AG04450 (cell line): ENCODE measurements at regions of chr5 and their contacts with region 1.

Region 1: GRCh38 chr5:142699184-142699720 is 13.4 kb upstream of the FGF1 start:
- DNase-seq: peak; percentile 76
- H3K4me3 ChIP-seq: no peak overlapping the region
- H3K27ac ChIP-seq: no peak overlapping the region
- H3K27me3 ChIP-seq: no peaks in the 10 kb centered on the region
- CTCF ChIP-seq: peak; percentile 97

Region 2: DNA sequence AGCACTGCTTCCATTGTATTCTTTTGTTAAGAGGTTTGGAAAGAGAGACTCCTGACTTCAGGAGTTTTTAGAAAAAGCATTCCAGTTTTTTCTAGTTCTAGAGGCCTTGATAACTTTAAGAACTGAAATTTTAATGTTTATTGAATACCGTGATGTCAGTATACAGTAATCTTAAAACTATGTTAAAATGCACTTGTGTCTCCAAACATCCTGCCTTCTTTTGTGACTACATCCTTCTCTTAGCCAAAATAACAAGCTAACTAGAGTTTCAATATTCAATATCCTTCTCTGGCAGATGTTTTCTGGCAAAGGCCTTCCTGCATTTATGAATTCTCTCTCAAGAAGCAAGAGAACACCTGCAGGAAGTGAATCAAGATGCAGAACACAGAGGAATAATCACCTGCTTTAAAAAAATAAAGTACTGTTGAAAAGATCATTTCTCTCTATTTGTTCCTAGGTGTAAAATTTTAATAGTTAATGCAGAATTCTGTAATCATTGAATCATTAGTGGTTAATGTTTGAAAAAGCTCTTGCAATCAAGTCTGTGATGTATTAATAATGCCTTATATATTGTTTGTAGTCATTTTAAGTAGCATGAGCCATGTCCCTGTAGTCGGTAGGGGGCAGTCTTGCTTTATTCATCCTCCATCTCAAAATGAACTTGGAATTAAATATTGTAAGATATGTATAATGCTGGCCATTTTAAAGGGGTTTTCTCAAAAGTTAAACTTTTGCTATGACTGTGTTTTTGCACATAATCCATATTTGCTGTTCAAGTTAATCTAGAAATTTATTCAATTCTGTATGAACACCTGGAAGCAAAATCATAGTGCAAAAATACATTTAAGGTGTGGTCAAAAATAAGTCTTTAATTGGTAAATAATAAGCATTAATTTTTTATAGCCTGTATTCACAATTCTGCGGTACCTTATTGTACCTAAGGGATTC is 547.5 kb before region 1 on chr5:
- CTCF ChIA-PET with region 1: interaction called, 21 read pairs
- POLR2A ChIA-PET with region 1: no interaction called
- DNase-seq: peak; percentile 74
- H3K4me3 ChIP-seq: no peak overlapping the region
- H3K27ac ChIP-seq: peak overlapping the region; percentile 47
- H3K27me3 ChIP-seq: no peaks in the 10 kb centered on the region
- CTCF ChIP-seq: peak; percentile 85

Region 3: DNA sequence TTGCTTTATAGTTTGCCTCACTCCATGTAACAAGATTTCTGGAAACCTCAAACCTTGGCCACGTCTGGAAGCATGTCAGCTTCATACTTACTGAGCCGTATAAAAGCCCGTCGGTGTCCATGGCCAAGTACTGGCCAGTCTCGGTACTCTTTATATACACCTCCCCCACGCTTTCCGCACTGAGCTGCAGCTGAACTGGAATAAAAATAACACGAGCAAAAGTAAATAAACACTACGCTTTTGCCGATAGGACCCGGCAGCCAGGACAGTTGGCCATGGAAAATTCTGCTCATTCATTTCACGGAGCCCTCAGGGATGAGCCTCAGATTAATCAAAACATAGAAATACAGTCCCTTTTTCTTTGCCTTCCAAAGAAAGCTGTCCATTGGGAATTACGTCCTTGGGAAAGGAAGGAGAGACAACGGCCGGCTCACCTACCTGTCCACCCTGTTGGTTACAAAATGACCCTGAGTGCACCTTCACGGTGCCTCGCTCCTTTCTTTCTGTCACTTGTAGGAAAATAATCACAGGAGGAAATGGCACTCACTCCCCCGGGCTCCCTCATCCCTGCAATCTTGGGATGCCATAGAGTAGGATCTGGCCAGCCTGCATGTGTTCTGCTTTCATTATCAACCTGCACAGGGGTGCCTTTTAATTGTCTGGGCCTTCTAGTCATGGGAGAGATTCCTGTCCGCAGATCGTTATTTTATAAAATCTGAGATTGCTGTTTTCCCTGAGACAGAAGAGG is 98.5 kb before region 1 on chr5:
- CTCF ChIA-PET with region 1: interaction called, 19 read pairs
- POLR2A ChIA-PET with region 1: no interaction called
- DNase-seq: peak; percentile 69
- H3K4me3 ChIP-seq: peak overlapping the region; percentile 41
- H3K27ac ChIP-seq: peak overlapping the region; percentile 72
- H3K27me3 ChIP-seq: no peaks in the 10 kb centered on the region
- CTCF ChIP-seq: no peak

Region 4: GRCh38 chr5:142618130-142618523 is 81.1 kb before region 1 on chr5:
- CTCF ChIA-PET with region 1: interaction called, 75 read pairs
- POLR2A ChIA-PET with region 1: no interaction called
- DNase-seq: peak; percentile 43
- H3K4me3 ChIP-seq: no peak overlapping the region
- H3K27ac ChIP-seq: no peak overlapping the region
- H3K27me3 ChIP-seq: no peaks in the 10 kb centered on the region
- CTCF ChIP-seq: no peak

Region 5: GRCh38 chr5:142650060-142650459 is 49.2 kb before region 1 on chr5:
- CTCF ChIA-PET with region 1: interaction called, 244 read pairs
- POLR2A ChIA-PET with region 1: interaction called, 9 read pairs
- DNase-seq: no peak
- H3K4me3 ChIP-seq: no peak overlapping the region
- H3K27ac ChIP-seq: no peak overlapping the region
- H3K27me3 ChIP-seq: no peaks in the 10 kb centered on the region
- CTCF ChIP-seq: no peak

Region 6: DNA sequence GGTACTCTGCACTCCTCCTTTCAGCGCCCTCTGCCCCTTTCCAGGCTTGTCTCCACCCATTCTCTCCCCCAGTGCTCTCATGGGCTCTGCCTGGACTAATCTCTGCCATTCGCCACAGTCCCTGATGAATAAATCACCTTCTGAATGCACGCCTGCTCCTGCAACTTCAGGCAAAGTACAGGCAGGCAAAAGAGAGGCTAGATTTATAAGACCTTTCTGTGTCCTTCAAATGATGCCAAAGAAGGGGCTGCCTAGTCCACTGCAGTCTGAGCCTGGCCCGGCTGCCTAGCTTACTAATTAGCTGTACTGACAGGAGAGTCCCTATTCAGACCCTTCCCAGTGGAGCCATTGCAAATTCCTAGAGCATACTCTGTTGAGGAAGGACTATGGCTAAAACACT is 20.7 kb before region 1 on chr5:
- CTCF ChIA-PET with region 1: no interaction called
- POLR2A ChIA-PET with region 1: no interaction called
- DNase-seq: no peak
- H3K4me3 ChIP-seq: no peak overlapping the region
- H3K27ac ChIP-seq: no peak overlapping the region
- H3K27me3 ChIP-seq: peaks cover 2% of the 10 kb centered on the region
- CTCF ChIP-seq: no peak

Region 7: DNA sequence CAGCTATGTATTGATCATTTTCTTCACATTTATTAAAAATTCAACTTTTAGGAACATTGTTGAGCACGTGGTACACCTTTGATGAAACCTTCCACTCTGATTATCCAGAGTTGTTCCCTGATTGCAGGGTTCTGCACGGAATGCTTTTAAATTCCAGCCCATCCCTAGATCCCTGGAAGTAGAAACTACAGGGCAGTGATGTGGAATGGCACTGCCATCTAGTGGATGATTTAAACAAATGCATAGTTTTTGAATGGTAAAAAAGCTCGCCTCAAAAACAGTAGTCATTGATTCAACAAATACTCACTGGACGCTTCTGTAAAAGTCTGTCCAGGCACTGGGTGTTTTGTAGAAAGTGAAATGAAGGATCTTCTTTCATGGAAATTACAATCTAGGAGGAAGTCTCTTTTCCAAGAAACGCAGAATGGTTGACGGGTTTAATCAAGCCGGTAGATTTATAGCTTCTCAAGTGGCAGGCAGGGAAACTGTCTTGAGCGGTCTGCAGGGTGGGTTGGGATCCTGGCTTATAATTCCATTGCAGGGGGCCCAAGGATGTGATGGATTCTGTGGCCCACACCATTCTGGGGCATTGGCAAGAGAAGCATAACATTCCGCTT is 189.3 kb after region 1 on chr5:
- CTCF ChIA-PET with region 1: interaction called, 14 read pairs
- POLR2A ChIA-PET with region 1: no interaction called
- DNase-seq: no peak
- H3K4me3 ChIP-seq: no peak overlapping the region
- H3K27ac ChIP-seq: no peak overlapping the region
- H3K27me3 ChIP-seq: no peaks in the 10 kb centered on the region
- CTCF ChIP-seq: peak; percentile 75